ENCODE measurements at regions of chr12 and their contacts with region 1.

Region 1: GRCh38 chr12:10673660-10674384 is at the start of gene STYK1:
- DNase-seq: peak; percentile 39 to 80 (median 60)
- ATAC-seq: peak; percentile 88
- H3K4me3 ChIP-seq: peak within 1 kb of the TSS; percentile 13
- H3K4me3 Mint-ChIP-seq: peak within 1 kb of the TSS; percentile 72
- H3K27ac ChIP-seq: no peak within 1 kb of the TSS
- H3K27ac Mint-ChIP-seq: no peak within 1 kb of the TSS
- H3K4me1 ChIP-seq: peaks cover 24% of the 10 kb centered on the region
- H3K4me1 Mint-ChIP-seq: peaks cover 36% of the 10 kb centered on the region
- H3K27me3 ChIP-seq: peaks cover 17 to 23% of the 10 kb centered on the region in 2 experiments
- H3K27me3 Mint-ChIP-seq: peaks cover 36% of the 10 kb centered on the region
- CTCF ChIP-seq: peak; percentile 75
- total RNA-seq, gene STYK1: not detected

Region 2: GRCh38 chr12:10235761-10236631 is 437.8 kb before region 1 on chr12:
- CTCF ChIA-PET with region 1: no interaction called
- POLR2A ChIA-PET with region 1: no interaction called
- intact Hi-C with region 1: loop called (anchors 1 to 2 kb)
- DNase-seq: peak in 13 of 14 experiments; percentile 7 to 77 (median 33)
- ATAC-seq: peak; percentile 77
- H3K4me3 ChIP-seq: no peak overlapping the region
- H3K4me3 Mint-ChIP-seq: no peak overlapping the region
- H3K27ac ChIP-seq: no peak overlapping the region
- H3K27ac Mint-ChIP-seq: no peak overlapping the region
- H3K4me1 ChIP-seq: no peaks in the 10 kb centered on the region
- H3K4me1 Mint-ChIP-seq: no peaks in the 10 kb centered on the region
- H3K27me3 ChIP-seq: no peaks in the 10 kb centered on the region
- H3K27me3 Mint-ChIP-seq: no peaks in the 10 kb centered on the region
- CTCF ChIP-seq: peak; percentile 92

Region 3: GRCh38 chr12:10331642-10332239 is 342.1 kb before region 1 on chr12:
- CTCF ChIA-PET with region 1: no interaction called
- POLR2A ChIA-PET with region 1: no interaction called
- intact Hi-C with region 1: loop called in 1 of 2 experiments (anchors 5 kb)
- DNase-seq: peak in 3 of 14 experiments; percentile 53 to 59 (median 56)
- ATAC-seq: peak; percentile 44
- H3K4me3 ChIP-seq: no peak overlapping the region
- H3K4me3 Mint-ChIP-seq: no peak overlapping the region
- H3K27ac ChIP-seq: no peak overlapping the region
- H3K27ac Mint-ChIP-seq: no peak overlapping the region
- H3K4me1 ChIP-seq: no peaks in the 10 kb centered on the region
- H3K4me1 Mint-ChIP-seq: no peaks in the 10 kb centered on the region
- H3K27me3 ChIP-seq: no peaks in the 10 kb centered on the region
- H3K27me3 Mint-ChIP-seq: no peaks in the 10 kb centered on the region
- CTCF ChIP-seq: peak; percentile 63

Region 4: DNA sequence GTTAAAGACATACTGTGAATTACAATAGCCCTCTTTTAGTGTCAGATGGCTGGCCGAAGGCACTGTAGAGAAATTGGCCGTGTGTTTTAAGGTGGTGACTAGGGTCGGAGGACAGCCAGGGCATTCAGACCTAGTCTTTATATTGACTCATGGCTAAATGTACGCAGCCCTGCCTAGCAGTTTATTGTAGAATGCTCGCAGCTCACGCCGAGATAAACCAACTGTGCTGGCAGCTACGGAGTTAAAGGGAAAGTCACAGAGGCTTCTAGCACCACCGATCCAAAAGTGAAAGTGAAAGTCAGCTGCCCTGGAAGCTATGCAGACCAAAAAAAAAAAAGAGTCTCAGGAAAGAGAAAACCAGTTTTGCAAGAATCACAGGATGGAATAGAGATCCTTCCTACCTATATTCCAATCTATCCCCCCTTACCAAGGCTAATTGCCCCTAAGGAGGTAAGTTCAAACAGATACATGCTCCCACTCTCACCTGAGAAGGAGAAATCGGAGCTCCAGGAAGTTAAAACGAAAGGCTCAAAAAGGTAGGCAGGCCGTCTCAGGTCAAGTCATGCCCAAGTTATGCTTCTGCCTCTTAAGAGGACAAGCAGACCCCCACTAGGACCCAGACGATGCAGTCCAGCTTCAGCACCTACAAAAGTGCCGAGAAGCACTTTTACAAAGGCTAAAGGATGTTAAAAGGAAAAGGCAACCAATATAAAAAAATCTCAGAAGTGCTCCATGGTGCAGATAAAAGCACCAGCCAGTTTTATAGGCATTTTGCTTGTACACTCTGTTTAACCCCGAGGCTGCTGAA is 308.8 kb before region 1 on chr12:
- CTCF ChIA-PET with region 1: no interaction called
- POLR2A ChIA-PET with region 1: no interaction called
- intact Hi-C with region 1: loop called in 1 of 2 experiments (anchors 2 kb)
- DNase-seq: peak; percentile 23 to 87 (median 48)
- ATAC-seq: peak; percentile 81
- H3K4me3 ChIP-seq: peak overlapping the region; percentile 73
- H3K4me3 Mint-ChIP-seq: no peak overlapping the region
- H3K27ac ChIP-seq: peak overlapping the region; percentile 52 to 77
- H3K27ac Mint-ChIP-seq: no peak overlapping the region
- H3K4me1 ChIP-seq: peaks cover 18% of the 10 kb centered on the region
- H3K4me1 Mint-ChIP-seq: peaks cover 12% of the 10 kb centered on the region
- H3K27me3 ChIP-seq: no peaks in the 10 kb centered on the region
- H3K27me3 Mint-ChIP-seq: no peaks in the 10 kb centered on the region
- CTCF ChIP-seq: no peak

Region 5: GRCh38 chr12:10562306-10562933 is 111.4 kb before region 1 on chr12:
- CTCF ChIA-PET with region 1: no interaction called
- POLR2A ChIA-PET with region 1: no interaction called
- intact Hi-C with region 1: loop called (anchors 5 kb)
- DNase-seq: peak in 4 of 14 experiments; percentile 33 to 69 (median 64)
- ATAC-seq: no peak
- H3K4me3 ChIP-seq: no peak overlapping the region
- H3K4me3 Mint-ChIP-seq: no peak overlapping the region
- H3K27ac ChIP-seq: no peak overlapping the region
- H3K27ac Mint-ChIP-seq: no peak overlapping the region
- H3K4me1 ChIP-seq: no peaks in the 10 kb centered on the region
- H3K4me1 Mint-ChIP-seq: peaks cover 6% of the 10 kb centered on the region
- H3K27me3 ChIP-seq: no peaks in the 10 kb centered on the region
- H3K27me3 Mint-ChIP-seq: peaks cover 27% of the 10 kb centered on the region
- CTCF ChIP-seq: peak; percentile 85

Region 6: GRCh38 chr12:10607885-10608458 is 65.8 kb before region 1 on chr12:
- CTCF ChIA-PET with region 1: no interaction called
- POLR2A ChIA-PET with region 1: no interaction called
- intact Hi-C with region 1: loop called (anchors 1 to 5 kb)
- DNase-seq: peak in 2 of 14 experiments; percentile 17 to 24
- ATAC-seq: no peak
- H3K4me3 ChIP-seq: no peak overlapping the region
- H3K4me3 Mint-ChIP-seq: no peak overlapping the region
- H3K27ac ChIP-seq: no peak overlapping the region
- H3K27ac Mint-ChIP-seq: no peak overlapping the region
- H3K4me1 ChIP-seq: peaks cover 11% of the 10 kb centered on the region
- H3K4me1 Mint-ChIP-seq: peaks cover 22% of the 10 kb centered on the region
- H3K27me3 ChIP-seq: no peaks in the 10 kb centered on the region
- H3K27me3 Mint-ChIP-seq: no peaks in the 10 kb centered on the region
- CTCF ChIP-seq: no peak

Region 7: GRCh38 chr12:10613349-10614055 is 60.3 kb before region 1 on chr12 and contains the start of gene MAGOHB:
- CTCF ChIA-PET with region 1: no interaction called
- POLR2A ChIA-PET with region 1: no interaction called
- intact Hi-C with region 1: loop called (anchors 1 to 5 kb)
- DNase-seq: peak; percentile 95 to 100 (median 98)
- ATAC-seq: peak; percentile 91
- H3K4me3 ChIP-seq: peak within 1 kb of the TSS; percentile 94
- H3K4me3 Mint-ChIP-seq: peak within 1 kb of the TSS; percentile 99
- H3K27ac ChIP-seq: peak within 1 kb of the TSS; percentile 93 to 95
- H3K27ac Mint-ChIP-seq: peak within 1 kb of the TSS; percentile 99
- H3K4me1 ChIP-seq: peaks cover 11% of the 10 kb centered on the region
- H3K4me1 Mint-ChIP-seq: peaks cover 26% of the 10 kb centered on the region
- H3K27me3 ChIP-seq: no peaks in the 10 kb centered on the region
- H3K27me3 Mint-ChIP-seq: peaks cover 17% of the 10 kb centered on the region
- CTCF ChIP-seq: no peak
- total RNA-seq, gene MAGOHB: 7.5 to 7.7 TPM

Measured in CD4-positive, alpha-beta T cell (primary cell).